Activated CD4-positive, alpha-beta T cell treated with anti-CD3 and anti-CD28 coated beads, Interleukin-2, amount 10 ng/mL, durations not matched to agents 7 days and 5 days (primary cell): ENCODE measurements at regions of chr10 and their contacts with region 1.

Region 1: DNA sequence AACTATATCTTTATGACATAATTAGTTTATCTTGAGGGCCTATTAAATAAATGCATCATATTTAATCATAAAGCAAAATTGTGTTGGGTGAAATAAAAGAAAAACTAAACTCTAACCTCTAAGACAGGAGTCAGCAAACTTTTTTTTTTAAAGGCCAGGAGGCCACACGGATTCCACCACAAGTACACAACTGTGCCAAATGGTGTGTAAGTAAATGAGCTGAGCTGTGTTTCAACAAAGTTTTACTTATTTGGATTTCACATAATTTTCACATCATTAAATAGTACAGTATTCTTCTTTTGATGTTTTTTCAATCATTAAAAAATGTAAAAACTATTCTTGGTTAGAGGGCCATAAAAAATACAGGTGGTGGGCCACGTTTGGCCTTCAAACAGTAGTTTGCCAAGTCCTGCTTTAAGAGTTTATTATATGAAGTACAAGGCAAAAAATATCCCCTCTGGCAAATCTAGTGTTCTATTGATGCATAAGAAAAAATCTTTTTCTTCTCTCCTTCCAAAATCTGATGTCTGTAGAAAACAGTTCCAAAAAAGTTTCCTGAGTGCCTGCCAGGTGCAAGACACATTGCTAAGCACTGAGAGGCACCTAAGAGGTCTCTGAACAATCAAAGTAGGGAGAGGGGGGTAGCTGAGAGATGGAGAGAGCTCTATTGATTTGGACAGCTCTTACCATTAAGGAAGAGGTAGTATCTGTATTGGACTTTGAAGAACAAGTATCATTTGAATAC is 26.5 kb upstream of the SPOCK2 start:
- DNase-seq: no peak
- H3K4me3 Mint-ChIP-seq: no peak overlapping the region
- H3K27ac Mint-ChIP-seq: no peak overlapping the region
- H3K4me1 Mint-ChIP-seq: peaks cover 20% of the 10 kb centered on the region
- H3K27me3 Mint-ChIP-seq: no peaks in the 10 kb centered on the region

Region 2: GRCh38 chr10:72009411-72010081 is 105.3 kb before region 1 on chr10:
- CTCF ChIA-PET with region 1: no interaction called
- POLR2A ChIA-PET with region 1: no interaction called
- DNase-seq: no peak
- H3K4me3 Mint-ChIP-seq: no peak overlapping the region
- H3K27ac Mint-ChIP-seq: peak overlapping the region; percentile 54
- H3K4me1 Mint-ChIP-seq: no peaks in the 10 kb centered on the region
- H3K27me3 Mint-ChIP-seq: no peaks in the 10 kb centered on the region

Region 3: GRCh38 chr10:72126184-72126871 is 11.4 kb after region 1 on chr10:
- CTCF ChIA-PET with region 1: interaction called, 10 read pairs
- POLR2A ChIA-PET with region 1: no interaction called
- DNase-seq: no peak
- H3K4me3 Mint-ChIP-seq: no peak overlapping the region
- H3K27ac Mint-ChIP-seq: no peak overlapping the region
- H3K4me1 Mint-ChIP-seq: peaks cover 43% of the 10 kb centered on the region
- H3K27me3 Mint-ChIP-seq: no peaks in the 10 kb centered on the region

Region 4: DNA sequence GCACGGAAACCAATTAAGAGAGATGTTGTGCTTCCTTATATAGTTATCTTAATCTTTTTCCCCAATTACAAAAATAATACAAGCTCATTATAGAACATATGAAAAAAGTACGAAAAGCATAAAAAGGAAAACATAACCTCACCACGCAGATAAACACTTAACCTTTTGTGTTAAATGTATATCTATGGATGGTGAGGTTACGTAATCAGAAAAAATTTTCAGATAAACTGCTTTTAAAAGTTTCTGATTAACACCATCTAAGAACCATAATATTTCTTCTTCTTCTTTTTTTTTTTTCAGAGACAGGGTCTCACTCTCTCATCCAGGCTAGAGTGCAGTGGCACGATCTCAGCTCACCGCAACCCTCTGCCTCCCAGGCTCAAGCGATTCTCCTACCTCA is 22.7 kb after region 1 on chr10:
- CTCF ChIA-PET with region 1: no interaction called
- POLR2A ChIA-PET with region 1: no interaction called
- DNase-seq: no peak
- H3K4me3 Mint-ChIP-seq: no peak overlapping the region
- H3K27ac Mint-ChIP-seq: no peak overlapping the region
- H3K4me1 Mint-ChIP-seq: peaks cover 31% of the 10 kb centered on the region
- H3K27me3 Mint-ChIP-seq: no peaks in the 10 kb centered on the region